Activated CD8-positive, alpha-beta memory T cell treated with anti-CD3 and anti-CD28 coated beads, Interleukin-2, amount 10 ng/mL, durations not matched to agents 7 days and 5 days (primary cell): ENCODE measurements at regions of chr7 and their contacts with region 1.

Region 1: GRCh38 chr7:2680792-2681490 is 7.1 kb upstream of the AMZ1 start:
- DNase-seq: peak; percentile 64
- ATAC-seq: peak; percentile 60
- H3K4me3 Mint-ChIP-seq: no peak overlapping the region
- H3K27ac Mint-ChIP-seq: no peak overlapping the region
- H3K4me1 Mint-ChIP-seq: no peaks in the 10 kb centered on the region
- H3K27me3 Mint-ChIP-seq: peaks cover 32% of the 10 kb centered on the region

Region 2: GRCh38 chr7:2477447-2478398 is 203.2 kb before region 1 on chr7:
- CTCF ChIA-PET with region 1: interaction called, 10 read pairs
- DNase-seq: peak; percentile 85
- ATAC-seq: peak; percentile 98
- H3K4me3 Mint-ChIP-seq: no peak overlapping the region
- H3K27ac Mint-ChIP-seq: no peak overlapping the region
- H3K4me1 Mint-ChIP-seq: peaks cover 13% of the 10 kb centered on the region
- H3K27me3 Mint-ChIP-seq: peaks cover 11% of the 10 kb centered on the region